Dendritic cell treated with granulocyte-macrophage colony-stimulating factor and Interleukin-4, amounts not matched to agents 40 ng/mL and 50 ng/mL, for 4 days (primary cell): ENCODE measurements at regions of chr9 and their contacts with region 1.

Region 1: GRCh38 chr9:18442629-18443491 is 31.1 kb upstream of the ADAMTSL1 start:
- H3K4me3 Mint-ChIP-seq: no peak overlapping the region
- H3K27ac Mint-ChIP-seq: no peak overlapping the region
- H3K4me1 Mint-ChIP-seq: no peaks in the 10 kb centered on the region
- H3K27me3 Mint-ChIP-seq: peaks cover 15% of the 10 kb centered on the region

Region 2: GRCh38 chr9:18060245-18060934 is 382.5 kb before region 1 on chr9:
- intact Hi-C with region 1: no loop called
- H3K4me3 Mint-ChIP-seq: no peak overlapping the region
- H3K27ac Mint-ChIP-seq: no peak overlapping the region
- H3K4me1 Mint-ChIP-seq: no peaks in the 10 kb centered on the region
- H3K27me3 Mint-ChIP-seq: no peaks in the 10 kb centered on the region

Region 3: DNA sequence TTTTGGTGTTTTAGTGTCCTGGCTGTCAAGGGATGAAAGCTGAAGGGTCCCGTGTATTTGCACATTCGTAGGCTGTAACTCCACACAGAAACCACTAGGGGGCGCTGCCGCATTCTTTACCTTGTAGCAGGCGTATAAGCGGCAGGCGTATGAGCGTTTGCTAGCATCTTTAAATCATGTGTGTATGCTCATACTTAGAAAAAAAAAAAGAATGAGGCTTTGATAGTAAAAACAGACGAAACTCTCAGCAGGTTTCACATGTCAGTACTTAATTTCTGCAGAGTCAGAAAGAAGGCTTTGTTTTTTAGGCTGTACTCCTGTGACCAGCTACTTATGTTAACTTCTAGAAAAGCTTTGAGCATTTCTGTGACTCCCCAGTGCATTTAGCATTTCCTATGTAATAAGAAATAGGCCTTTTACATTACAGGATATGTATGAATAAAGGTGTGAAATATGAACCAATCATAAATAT is 187.7 kb before region 1 on chr9:
- intact Hi-C with region 1: loop called (anchors 2 kb)
- H3K4me3 Mint-ChIP-seq: no peak overlapping the region
- H3K27ac Mint-ChIP-seq: no peak overlapping the region
- H3K4me1 Mint-ChIP-seq: no peaks in the 10 kb centered on the region
- H3K27me3 Mint-ChIP-seq: peaks cover 6% of the 10 kb centered on the region

Region 4: DNA sequence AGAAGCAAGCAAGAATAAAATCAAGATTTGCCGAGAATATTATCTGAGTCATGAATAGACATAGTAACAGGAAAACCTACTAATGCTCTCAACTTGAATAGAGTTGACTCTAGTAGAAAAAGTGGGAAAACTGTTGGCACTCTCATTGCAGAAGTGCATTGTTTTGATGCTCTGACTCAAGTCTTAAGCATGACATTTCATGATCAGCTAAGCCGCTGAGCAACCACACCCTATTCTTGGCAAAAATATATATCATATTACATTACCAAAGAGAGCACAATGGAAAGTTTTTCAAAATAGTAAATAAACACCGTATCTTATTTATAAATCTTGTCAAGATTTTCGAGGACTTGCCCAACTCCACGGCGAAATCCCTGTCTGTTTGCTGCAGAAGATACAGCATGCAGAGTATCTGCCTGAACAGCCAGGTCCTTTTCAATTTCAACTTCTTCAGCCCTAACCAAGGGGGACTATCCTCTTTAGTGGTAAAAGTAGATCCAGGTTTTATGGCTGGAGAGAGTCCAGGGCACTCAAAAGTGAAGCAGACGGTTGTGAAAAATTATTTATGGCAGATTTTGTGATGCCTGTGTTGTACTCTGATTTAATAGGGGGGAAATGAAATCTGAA is 17.2 kb after region 1 on chr9:
- intact Hi-C with region 1: no loop called
- H3K4me3 Mint-ChIP-seq: no peak overlapping the region
- H3K27ac Mint-ChIP-seq: no peak overlapping the region
- H3K4me1 Mint-ChIP-seq: no peaks in the 10 kb centered on the region
- H3K27me3 Mint-ChIP-seq: no peaks in the 10 kb centered on the region

Region 5: GRCh38 chr9:18580151-18580550 is 137.3 kb after region 1 on chr9:
- intact Hi-C with region 1: no loop called
- H3K4me3 Mint-ChIP-seq: no peak overlapping the region
- H3K27ac Mint-ChIP-seq: no peak overlapping the region
- H3K4me1 Mint-ChIP-seq: no peaks in the 10 kb centered on the region
- H3K27me3 Mint-ChIP-seq: no peaks in the 10 kb centered on the region

Region 6: DNA sequence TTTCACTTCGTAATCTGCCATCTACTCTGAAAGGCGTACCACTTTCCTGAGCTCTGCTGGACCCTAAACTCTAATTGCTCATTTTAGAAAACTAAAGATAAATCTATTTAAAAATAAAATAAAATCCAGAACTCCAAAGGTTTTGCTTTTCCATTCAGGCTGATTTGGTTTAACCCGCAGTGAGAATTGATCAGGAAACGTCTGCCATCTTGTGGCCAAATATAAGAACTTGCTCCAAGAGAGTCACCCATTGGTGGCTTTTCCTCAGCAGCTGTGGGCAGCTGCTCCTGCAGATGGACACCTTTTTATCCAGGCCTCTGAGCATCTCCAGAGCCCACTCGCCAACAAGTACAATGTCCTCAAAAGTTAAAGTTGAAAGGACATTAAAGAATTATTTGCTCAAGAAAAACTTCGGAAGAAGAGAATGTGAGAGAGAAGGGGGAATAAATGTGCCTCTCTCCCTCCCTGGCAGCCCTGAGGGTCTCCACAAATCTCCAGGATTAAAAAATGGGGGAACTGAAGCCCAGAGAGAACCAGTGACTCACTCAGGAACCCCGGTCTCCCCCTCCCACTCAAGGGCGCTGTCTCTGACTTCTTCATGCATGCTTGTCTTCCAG is 586.1 kb after region 1 on chr9:
- intact Hi-C with region 1: loop called (anchors 10 kb)
- H3K4me3 Mint-ChIP-seq: no peak overlapping the region
- H3K27ac Mint-ChIP-seq: no peak overlapping the region
- H3K4me1 Mint-ChIP-seq: peaks cover 5% of the 10 kb centered on the region
- H3K27me3 Mint-ChIP-seq: peaks cover 3% of the 10 kb centered on the region